A549 (cell line): ENCODE measurements at regions of chr9 and their contacts with region 1.

Region 1: DNA sequence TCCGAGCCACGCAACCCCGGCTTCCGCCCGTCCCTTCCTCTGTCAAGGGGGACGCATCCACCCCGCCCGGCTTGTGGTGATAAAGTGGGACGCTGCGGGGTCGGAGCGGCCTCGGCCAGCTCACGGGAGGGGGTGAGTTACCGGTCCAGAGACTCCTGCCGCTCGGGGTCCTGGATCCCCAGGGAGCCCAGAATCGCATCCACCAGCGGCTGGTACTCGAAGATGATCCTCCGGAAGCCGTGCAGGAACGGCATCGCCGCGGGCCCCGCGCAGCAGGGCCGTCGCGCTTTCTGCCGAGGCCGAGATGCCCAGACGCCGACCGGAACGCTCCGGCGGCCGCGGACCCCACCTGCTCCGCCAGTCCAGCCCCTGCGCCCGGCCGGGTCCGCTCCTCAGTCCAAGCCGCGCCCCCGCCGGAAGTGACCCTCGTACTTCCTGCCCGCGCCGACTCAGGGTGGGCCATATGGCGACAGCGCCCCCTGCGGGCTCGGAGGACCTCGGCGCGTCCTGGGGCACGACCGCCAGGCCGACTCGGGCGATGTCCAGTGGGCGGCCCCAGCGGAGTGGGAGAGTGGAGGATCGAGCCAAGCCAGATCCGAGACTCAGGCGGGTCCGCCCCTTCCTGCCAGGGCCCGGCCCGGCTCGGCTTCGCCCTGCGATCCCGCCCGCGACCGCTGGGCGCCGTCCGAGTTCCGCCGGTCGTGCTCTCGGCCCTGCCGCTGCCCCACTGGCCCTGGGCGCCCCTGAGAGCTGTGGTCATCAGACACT is at the start of gene ASB6:
- DNase-seq: peak; percentile 98
- ATAC-seq: peak; percentile 93 to 97
- H3K4me3 ChIP-seq: peak within 1 kb of the TSS; percentile 87
- H3K27ac ChIP-seq: peak within 1 kb of the TSS; percentile 83 to 94
- H3K4me1 ChIP-seq: peaks cover 18% of the 10 kb centered on the region
- CTCF ChIP-seq: peak; percentile 99
- EP300 ChIP-seq: no peak
- POLR2A ChIP-seq: peak; percentile 60
- RAD21 ChIP-seq: peak; percentile 87 to 99
- polyA plus RNA-seq, gene ASB6: 9.2 and 9.4 TPM in 2 replicates

Region 2: DNA sequence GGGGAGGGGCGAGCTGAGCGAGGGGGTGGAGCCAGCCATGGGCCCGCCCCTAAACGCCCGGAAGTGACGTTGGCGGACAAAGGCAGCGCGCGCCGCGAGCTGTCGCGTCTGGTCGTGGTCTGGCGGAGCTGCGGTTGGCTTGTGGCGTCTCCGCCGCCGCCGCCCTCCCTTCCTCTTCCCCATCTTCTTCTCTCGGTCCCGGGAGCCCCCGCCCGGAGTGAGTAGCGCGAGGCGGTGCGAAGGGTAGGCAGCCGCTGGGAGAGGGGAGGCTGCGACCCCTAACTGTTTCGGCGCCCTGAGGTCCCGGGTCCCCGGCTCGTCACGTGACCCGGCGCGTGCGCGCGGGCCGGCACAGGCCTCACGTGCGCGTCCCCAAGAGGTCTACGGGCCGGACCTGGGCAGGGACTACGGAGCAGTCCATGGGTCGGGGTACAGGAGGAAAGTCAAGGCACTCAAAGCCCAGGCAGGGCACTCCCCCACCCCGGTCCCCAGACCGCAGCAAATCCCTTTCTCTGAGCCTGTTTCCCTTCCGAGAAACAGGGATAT is 15.8 kb before region 1 on chr9 and contains the start of gene NTMT1:
- CTCF ChIA-PET with region 1: interaction called, 136 read pairs
- POLR2A ChIA-PET with region 1: interaction called, 5 read pairs
- DNase-seq: peak; percentile 77 to 87
- ATAC-seq: peak; percentile 78 to 84
- H3K4me3 ChIP-seq: peak within 1 kb of the TSS; percentile 69
- H3K27ac ChIP-seq: peak within 1 kb of the TSS; percentile 78 to 98
- H3K4me1 ChIP-seq: peaks cover 28% of the 10 kb centered on the region
- CTCF ChIP-seq: no peak
- EP300 ChIP-seq: no peak
- POLR2A ChIP-seq: peak; percentile 93
- RAD21 ChIP-seq: no peak
- polyA plus RNA-seq, gene NTMT1: 39.2 and 49.4 TPM in 2 replicates

Region 3: DNA sequence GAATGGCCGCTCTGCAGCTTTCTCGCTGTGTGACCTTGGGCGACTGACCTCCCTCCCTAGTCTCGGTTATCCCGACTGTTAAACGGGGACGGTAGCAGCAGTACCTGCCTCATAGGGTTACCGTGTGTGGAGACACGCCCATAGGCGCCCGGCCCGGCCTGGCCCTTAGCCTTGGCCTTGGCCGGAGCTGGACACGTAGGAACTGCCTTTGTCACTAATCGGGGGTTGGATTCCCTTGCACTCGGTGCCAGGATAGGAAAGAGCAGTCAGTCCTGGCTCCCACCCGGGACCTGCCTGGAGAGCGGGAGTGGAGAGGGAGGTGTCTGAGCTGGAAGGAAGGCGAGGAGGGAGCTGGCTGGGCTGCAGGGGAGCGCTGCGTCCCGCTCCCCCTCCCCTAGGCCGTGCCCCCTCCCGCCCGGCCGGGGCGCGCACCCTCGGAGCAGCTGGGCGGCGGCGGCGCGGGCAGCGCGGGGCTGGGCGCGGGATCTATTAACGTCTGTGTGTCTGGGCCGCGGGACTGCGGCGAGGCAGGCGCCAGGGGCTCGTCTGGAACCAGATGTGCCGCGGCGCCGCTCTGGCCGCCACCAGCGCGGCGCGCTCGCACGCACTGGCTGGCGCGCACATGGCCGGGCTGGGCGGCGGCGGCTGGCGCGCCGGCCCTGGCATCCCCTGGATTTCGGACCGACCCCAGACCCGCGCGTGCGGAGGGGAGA is 55.2 kb after region 1 on chr9:
- CTCF ChIA-PET with region 1: interaction called, 18 read pairs
- POLR2A ChIA-PET with region 1: interaction called, 4 read pairs
- DNase-seq: peak; percentile 44 to 60
- ATAC-seq: peak; percentile 76 to 85
- H3K4me3 ChIP-seq: peak overlapping the region; percentile 64
- H3K27ac ChIP-seq: peak overlapping the region; percentile 97
- H3K4me1 ChIP-seq: peaks cover 13% of the 10 kb centered on the region
- CTCF ChIP-seq: no peak
- EP300 ChIP-seq: no peak
- POLR2A ChIP-seq: peak; percentile 43
- RAD21 ChIP-seq: no peak

Region 4: DNA sequence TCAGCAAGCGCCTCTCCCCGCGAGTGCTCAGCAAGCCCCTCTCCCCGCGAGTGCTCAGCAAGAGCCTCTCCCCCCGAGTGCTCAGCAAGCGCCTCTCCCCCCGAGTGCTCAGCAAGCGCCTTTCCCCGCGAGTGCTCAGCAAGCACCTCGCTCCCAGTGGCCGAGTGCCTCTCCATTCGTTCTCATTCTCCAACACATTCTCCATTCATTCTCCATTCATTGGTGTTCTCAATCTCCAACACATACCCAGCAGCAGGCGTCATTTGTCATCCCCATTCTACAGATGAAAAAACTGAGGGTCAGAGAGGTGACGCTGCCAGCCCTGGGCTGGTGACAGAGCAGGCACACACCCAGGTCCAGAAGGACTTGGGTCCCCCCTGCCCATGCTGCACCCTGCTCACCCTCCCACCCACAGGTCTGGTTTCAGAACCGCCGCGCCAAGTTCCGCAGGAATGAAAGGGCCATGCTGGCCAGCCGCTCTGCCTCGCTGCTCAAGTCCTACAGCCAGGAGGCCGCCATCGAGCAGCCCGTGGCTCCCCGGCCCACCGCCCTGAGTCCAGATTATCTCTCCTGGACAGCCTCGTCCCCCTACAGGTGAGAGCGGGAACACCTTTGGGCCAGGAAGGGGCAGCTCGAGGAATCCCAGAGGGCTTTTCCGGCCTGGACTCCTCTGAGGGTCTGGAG is 78.4 kb after region 1 on chr9:
- CTCF ChIA-PET with region 1: interaction called, 103 read pairs
- POLR2A ChIA-PET with region 1: no interaction called
- DNase-seq: peak; percentile 36 to 55
- ATAC-seq: peak; percentile 67 to 80
- H3K4me3 ChIP-seq: no peak overlapping the region
- H3K27ac ChIP-seq: no peak overlapping the region
- H3K4me1 ChIP-seq: no peaks in the 10 kb centered on the region
- CTCF ChIP-seq: no peak; the same call in 2 of the 3 replicates
- EP300 ChIP-seq: no peak
- POLR2A ChIP-seq: no peak
- RAD21 ChIP-seq: peak in 1 of 2 experiments; percentile 17; a peak in 1 of 5 replicates

Region 5: GRCh38 chr9:129783516-129784361 is 141.8 kb after region 1 on chr9:
- CTCF ChIA-PET with region 1: interaction called, 251 read pairs
- POLR2A ChIA-PET with region 1: no interaction called
- DNase-seq: peak; percentile 78 to 92
- ATAC-seq: peak; percentile 95 to 98
- H3K4me3 ChIP-seq: no peak overlapping the region
- H3K27ac ChIP-seq: peak overlapping the region; percentile 51 to 73
- H3K4me1 ChIP-seq: peaks cover 9% of the 10 kb centered on the region; the same call in 1 of the 3 replicates
- CTCF ChIP-seq: peak; percentile 95
- EP300 ChIP-seq: no peak
- POLR2A ChIP-seq: no peak
- RAD21 ChIP-seq: peak; percentile 98 to 99